A673 (cell line): ENCODE measurements at regions of chr20 and their contacts with region 1.

Region 1: GRCh38 chr20:47950073-47950913 is 165.0 kb upstream of the SULF2 start:
- DNase-seq: peak; percentile 63
- H3K4me3 ChIP-seq: no peak overlapping the region
- H3K27ac ChIP-seq: no peak overlapping the region
- H3K4me1 ChIP-seq: peaks cover 8% of the 10 kb centered on the region
- H3K27me3 ChIP-seq: no peaks in the 10 kb centered on the region
- CTCF ChIP-seq: no peak

Region 2: DNA sequence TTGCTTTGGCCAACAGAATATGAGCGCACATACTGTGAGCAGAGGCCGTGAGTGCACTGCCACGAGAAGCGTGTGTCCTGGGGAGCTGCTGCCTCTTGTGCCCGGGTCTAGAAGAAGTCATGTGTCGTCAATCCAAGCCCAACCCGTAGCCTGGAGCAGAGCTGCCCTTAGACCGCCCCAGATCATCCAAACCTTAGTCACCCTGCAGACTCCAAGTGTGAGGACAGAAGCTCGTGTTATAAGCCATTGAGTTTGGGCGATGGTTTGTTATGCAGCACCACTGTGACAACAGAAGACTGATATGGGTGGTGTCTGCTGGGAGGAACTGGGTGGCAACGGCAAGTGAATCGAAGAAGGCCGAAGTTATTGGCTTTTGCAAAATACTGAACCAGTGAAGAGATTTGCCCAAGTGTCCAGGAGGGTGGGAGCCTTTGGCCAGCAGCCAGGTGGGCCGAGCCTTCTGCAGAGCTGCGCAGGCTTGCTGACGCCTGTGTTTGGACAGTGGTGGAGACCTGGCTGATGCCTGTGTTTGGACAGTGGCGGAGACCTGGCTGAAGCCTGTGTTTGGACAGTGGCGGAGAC is 63.7 kb before region 1 on chr20:
- CTCF ChIA-PET with region 1: no interaction called
- POLR2A ChIA-PET with region 1: no interaction called
- intact Hi-C with region 1: no loop called
- DNase-seq: no peak
- H3K4me3 ChIP-seq: no peak overlapping the region
- H3K27ac ChIP-seq: no peak overlapping the region
- H3K4me1 ChIP-seq: no peaks in the 10 kb centered on the region
- H3K27me3 ChIP-seq: peaks cover 13% of the 10 kb centered on the region
- CTCF ChIP-seq: no peak

Region 3: GRCh38 chr20:48088240-48088639 is 137.9 kb after region 1 on chr20:
- CTCF ChIA-PET with region 1: interaction called, 11 read pairs
- POLR2A ChIA-PET with region 1: no interaction called
- intact Hi-C with region 1: no loop called
- DNase-seq: no peak
- H3K4me3 ChIP-seq: no peak overlapping the region
- H3K27ac ChIP-seq: no peak overlapping the region
- H3K4me1 ChIP-seq: no peaks in the 10 kb centered on the region
- H3K27me3 ChIP-seq: peaks cover 11% of the 10 kb centered on the region
- CTCF ChIP-seq: no peak